AG04449 (cell line): ENCODE measurements at regions of chr11 and their contacts with region 1.

Region 1: DNA sequence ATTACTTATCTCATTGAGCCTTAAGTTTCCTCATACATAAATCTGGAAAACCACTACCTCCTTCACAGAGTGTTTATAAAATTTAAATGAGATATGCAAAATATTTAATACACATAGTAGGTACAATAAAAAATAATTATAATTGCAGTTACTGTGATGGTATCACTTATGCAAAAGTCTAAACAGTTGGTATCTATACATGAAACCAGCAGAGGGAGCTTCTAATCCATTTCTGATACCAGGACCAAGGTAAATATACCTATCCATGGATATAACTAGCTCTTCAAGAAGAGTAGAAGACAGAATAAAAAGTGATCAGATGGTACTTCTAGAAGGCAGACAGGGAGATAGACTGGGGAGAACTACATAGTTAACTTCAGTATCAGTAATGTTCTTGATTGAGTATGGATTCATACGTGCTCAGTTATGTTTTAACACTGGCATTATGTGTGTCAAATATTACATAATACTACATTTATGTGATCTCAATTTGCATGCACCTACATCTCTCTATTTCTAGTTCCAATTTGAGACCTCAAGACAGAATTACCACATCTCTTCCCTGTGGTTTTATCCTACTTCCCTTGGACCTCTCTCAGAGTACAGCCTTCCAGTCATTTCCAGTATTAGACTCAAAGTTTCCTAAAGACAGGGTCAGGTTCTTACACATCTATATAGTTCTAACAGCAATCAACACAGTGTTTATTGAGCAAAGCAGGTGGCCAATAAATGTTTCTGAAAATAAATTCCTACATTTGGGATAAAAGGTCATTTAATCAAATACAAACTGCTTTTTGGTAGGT is 13.7 kb upstream of the TSG101 start:
- DNase-seq: no peak
- H3K4me3 ChIP-seq: no peak overlapping the region
- CTCF ChIP-seq: peak; percentile 14

Region 2: GRCh38 chr11:18329196-18329870 is 211.1 kb before region 1 on chr11:
- CTCF ChIA-PET with region 1: no interaction called
- POLR2A ChIA-PET with region 1: no interaction called
- DNase-seq: no peak
- H3K4me3 ChIP-seq: no peak overlapping the region
- CTCF ChIP-seq: no peak

Region 3: DNA sequence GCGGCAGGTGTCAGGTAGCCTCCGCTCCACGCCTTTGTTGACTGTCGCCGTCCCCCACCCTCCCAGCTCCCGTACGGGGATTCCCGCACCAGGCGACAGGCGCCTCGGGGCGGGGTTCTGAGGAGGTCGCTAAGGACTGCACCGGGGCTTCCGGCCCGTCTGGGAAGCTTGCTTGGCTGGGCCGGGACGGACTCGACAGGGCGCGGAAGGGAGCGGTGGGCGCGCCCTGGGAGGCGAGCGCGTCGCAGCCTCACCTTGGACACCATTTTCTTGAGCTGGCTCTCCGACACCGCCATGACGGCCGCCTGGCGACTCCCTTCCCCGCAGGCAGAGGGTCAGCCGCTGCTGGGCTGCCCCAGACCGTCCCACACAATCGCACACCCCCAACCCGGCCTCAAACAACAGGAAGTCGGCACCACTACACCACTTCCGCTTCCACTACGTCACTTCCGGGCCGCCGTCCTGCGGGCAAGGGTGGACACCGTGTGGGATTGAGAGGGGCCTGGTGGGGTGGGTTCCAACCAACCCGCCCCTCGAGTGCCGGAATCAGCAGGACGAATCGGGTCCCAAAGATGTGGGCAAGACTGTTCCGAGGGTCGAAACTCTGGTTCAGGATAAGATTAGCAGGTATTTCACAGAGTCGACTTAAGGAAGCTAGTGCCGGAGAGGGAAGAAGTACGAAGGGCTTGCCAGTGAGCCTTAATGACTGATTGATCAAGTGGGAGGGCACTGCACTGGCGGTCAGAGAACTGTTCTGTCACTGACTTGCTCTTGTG is 13.7 kb before region 1 on chr11 and contains the start of gene TSG101:
- CTCF ChIA-PET with region 1: interaction called, 16 read pairs
- POLR2A ChIA-PET with region 1: interaction called, 3 read pairs
- DNase-seq: peak; percentile 42
- H3K4me3 ChIP-seq: peak within 1 kb of the TSS; percentile 84
- CTCF ChIP-seq: no peak